ENCODE measurements at regions of chr5 and their contacts with region 1.

Region 1: DNA sequence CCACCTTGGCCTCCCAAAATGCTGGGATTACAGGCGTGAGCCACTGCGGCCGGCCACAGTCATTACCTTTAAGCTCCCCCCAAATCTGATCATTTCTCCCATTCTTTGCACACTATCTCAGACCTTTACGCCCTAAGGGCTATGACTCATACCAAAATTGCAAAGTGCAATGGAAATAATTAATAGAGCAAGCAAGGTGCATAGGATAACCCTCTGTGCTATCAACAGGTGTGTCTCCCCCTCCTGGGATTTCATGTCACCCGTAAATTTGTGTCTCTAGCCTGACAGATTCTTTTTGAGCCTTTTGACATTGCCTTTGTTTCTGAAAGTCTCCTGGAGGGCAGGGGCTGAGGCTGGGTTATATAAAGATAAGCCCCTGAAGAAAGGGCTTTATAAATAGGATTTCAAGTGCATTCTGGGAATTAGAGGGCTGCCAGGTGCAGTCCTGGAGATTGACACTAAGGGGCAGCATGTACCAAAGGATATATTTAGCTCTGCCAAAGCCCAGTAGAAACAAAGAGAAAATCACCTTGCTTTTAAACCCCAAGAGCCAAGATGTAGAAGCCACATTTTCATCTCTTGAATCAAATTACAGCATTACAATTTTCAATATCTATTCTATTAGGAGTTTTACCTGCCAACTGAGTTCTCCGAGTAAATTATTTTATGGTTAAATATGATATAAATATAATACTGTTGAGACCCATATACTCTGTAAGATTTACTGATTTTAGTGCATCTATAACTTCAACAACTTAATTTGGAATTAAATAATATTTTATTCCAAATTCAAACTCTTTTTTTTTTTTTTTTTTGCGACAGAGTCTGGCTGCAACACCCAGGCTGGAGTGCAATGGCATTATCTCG is 18.2 kb downstream of the S100Z start:
- DNase-seq: peak; percentile 56 to 63 (median 62)
- H3K4me3 ChIP-seq: no peak overlapping the region
- H3K4me3 Mint-ChIP-seq: no peak overlapping the region
- H3K27ac ChIP-seq: no peak overlapping the region
- H3K27ac Mint-ChIP-seq: no peak overlapping the region
- H3K4me1 ChIP-seq: no peaks in the 10 kb centered on the region
- H3K4me1 Mint-ChIP-seq: peaks cover 0 to 2% (median 0%) of the 10 kb centered on the region in 4 donors
- H3K27me3 ChIP-seq: no peaks in the 10 kb centered on the region
- H3K27me3 Mint-ChIP-seq: no peaks in the 10 kb centered on the region

Region 2: GRCh38 chr5:77030097-77031071 is 162.3 kb after region 1 on chr5 and contains the start of gene AGGF1:
- CTCF ChIA-PET with region 1: no interaction called
- POLR2A ChIA-PET with region 1: no interaction called
- intact Hi-C with region 1: loop called (anchors 5 kb)
- DNase-seq: peak; percentile 88 to 94 (median 90)
- H3K4me3 ChIP-seq: peak within 1 kb of the TSS; percentile 43 to 93
- H3K4me3 Mint-ChIP-seq: peak within 1 kb of the TSS; percentile 81 to 97 (median 94)
- H3K27ac ChIP-seq: peak within 1 kb of the TSS; percentile 82
- H3K27ac Mint-ChIP-seq: peak within 1 kb of the TSS; percentile 78 to 97 (median 92)
- H3K4me1 ChIP-seq: peaks cover 34% of the 10 kb centered on the region
- H3K4me1 Mint-ChIP-seq: peaks cover 25 to 49% (median 35%) of the 10 kb centered on the region in 4 donors
- H3K27me3 ChIP-seq: no peaks in the 10 kb centered on the region
- H3K27me3 Mint-ChIP-seq: peaks cover 0 to 1% of the 10 kb centered on the region in 2 donors
- total RNA-seq, gene AGGF1: 29.4 to 29.6 TPM

Region 3: DNA sequence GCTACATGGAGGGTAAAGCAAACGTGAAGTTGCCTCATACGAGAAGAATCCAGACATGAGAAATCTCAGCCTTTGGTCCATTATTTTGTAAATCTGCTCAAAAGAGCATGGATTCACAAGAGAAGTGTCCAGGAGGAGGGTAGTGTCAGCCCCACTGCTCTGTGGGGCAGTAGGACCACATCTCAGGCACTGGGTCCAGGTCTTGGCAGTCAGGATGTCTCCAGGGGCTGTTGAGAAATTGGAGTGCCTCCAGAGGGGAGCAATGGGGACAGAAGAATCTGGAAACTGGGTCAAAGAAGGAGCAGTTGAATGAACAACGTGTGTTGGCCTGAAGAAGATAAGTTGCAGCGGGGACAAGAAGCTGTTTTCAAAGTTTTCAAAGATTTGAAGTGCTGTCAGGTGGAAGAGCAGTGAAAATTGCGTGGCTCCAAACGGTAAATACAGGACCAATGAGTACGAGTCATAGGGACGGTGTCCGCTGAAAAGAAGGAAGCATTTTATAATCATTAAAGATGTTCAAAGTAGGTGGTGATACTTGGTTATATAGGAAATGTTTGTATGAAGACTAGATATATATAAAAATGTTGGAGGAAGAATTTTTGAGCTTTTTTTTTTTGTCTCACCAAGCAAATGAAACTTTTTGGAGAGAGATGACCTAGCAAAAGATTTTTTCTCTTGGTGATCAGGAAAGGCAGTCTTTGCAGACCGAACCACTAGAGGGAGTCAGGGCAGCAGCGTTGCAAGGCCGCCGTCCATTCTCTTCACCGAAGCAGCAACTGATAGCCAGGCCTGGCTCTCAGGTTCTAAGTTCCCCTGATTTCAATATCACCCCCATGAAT is 276.2 kb after region 1 on chr5:
- CTCF ChIA-PET with region 1: no interaction called
- POLR2A ChIA-PET with region 1: no interaction called
- intact Hi-C with region 1: loop called (anchors 1 kb)
- DNase-seq: peak; percentile 47 to 58 (median 53)
- H3K4me3 ChIP-seq: no peak overlapping the region
- H3K4me3 Mint-ChIP-seq: no peak overlapping the region
- H3K27ac ChIP-seq: no peak overlapping the region
- H3K27ac Mint-ChIP-seq: peak overlapping the region in 3 of 7 donors; percentile 32 to 60 (median 40)
- H3K4me1 ChIP-seq: no peaks in the 10 kb centered on the region
- H3K4me1 Mint-ChIP-seq: peaks cover 0 to 4% (median 3%) of the 10 kb centered on the region in 4 donors
- H3K27me3 ChIP-seq: no peaks in the 10 kb centered on the region
- H3K27me3 Mint-ChIP-seq: peaks cover 0 to 2% of the 10 kb centered on the region in 2 donors

Region 4: DNA sequence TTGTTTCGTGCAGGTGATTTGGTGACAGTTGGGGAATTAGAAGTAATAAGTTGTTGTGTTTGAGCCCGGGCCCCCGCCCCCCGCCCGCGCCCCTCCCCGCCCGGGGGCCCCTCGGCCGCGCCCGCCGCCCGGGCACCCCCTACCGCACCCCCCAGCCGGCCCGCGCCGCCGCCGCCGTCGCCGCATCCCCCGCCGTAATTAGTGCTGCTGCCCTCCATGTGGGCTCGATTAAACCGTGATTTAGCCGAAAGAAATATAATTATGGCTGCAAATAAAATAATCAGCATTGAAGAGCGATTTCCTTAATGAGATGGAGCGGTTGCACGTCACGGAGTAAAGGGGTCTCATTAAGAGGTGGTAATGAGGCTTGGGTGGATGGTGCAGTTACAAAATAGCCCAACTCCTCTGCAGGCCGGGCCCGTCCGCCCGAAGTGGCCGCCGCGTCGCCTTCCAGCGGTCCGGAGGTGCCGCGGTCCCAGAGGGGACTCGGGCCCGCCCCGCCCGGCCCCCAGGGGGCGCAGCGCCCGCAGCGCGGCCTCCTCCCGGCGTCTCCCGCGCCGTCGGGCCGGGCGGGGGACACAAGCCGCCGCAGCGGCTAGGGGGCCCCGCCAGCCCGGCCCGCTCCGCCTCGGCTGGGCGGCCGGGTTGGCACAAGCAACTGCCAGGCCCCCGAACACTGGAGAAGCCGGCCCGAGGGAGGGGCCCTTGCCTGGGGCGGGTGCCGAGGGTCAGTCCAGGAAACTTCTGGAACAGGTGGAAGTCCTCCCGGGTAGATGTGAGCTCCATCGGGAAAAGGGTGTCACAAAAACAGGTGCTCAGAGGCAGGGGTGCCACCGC is 777.3 kb after region 1 on chr5:
- CTCF ChIA-PET with region 1: no interaction called
- POLR2A ChIA-PET with region 1: no interaction called
- intact Hi-C with region 1: loop called (anchors 5 kb)
- DNase-seq: peak in 2 of 5 donors; percentile 39 to 49
- H3K4me3 ChIP-seq: no peak overlapping the region
- H3K4me3 Mint-ChIP-seq: peak overlapping the region; percentile 60 to 82 (median 72)
- H3K27ac ChIP-seq: no peak overlapping the region
- H3K27ac Mint-ChIP-seq: peak overlapping the region in 3 of 7 donors; percentile 2 to 65 (median 55)
- H3K4me1 ChIP-seq: peaks cover 9% of the 10 kb centered on the region
- H3K4me1 Mint-ChIP-seq: peaks cover 13 to 41% (median 18%) of the 10 kb centered on the region in 4 donors
- H3K27me3 ChIP-seq: peaks cover 57% of the 10 kb centered on the region
- H3K27me3 Mint-ChIP-seq: peaks cover 58 to 74% of the 10 kb centered on the region in 2 donors

Region 5: GRCh38 chr5:78269088-78269703 is 1401.1 kb after region 1 on chr5:
- CTCF ChIA-PET with region 1: interaction called, 5 read pairs
- POLR2A ChIA-PET with region 1: no interaction called
- intact Hi-C with region 1: loop called (anchors 1 kb)
- DNase-seq: peak in 3 of 5 donors; percentile 14 to 19 (median 18)
- H3K4me3 ChIP-seq: no peak overlapping the region
- H3K4me3 Mint-ChIP-seq: no peak overlapping the region
- H3K27ac ChIP-seq: no peak overlapping the region
- H3K27ac Mint-ChIP-seq: peak overlapping the region in 1 of 7 donors; percentile 25
- H3K4me1 ChIP-seq: no peaks in the 10 kb centered on the region
- H3K4me1 Mint-ChIP-seq: peaks cover 10 to 14% (median 13%) of the 10 kb centered on the region in 4 donors
- H3K27me3 ChIP-seq: no peaks in the 10 kb centered on the region
- H3K27me3 Mint-ChIP-seq: no peaks in the 10 kb centered on the region

Measured in CD4-positive, alpha-beta memory T cell (primary cell).